A673 (cell line): ENCODE measurements at regions of chr2 and their contacts with region 1.

Region 1: GRCh38 chr2:122748552-122749011 is 993.1 kb downstream of the TSN start:
- DNase-seq: peak; percentile 95
- H3K4me3 ChIP-seq: no peak overlapping the region
- H3K27ac ChIP-seq: peak overlapping the region; percentile 70
- H3K4me1 ChIP-seq: peaks cover 48% of the 10 kb centered on the region
- H3K27me3 ChIP-seq: no peaks in the 10 kb centered on the region
- CTCF ChIP-seq: peak; percentile 55

Region 2: DNA sequence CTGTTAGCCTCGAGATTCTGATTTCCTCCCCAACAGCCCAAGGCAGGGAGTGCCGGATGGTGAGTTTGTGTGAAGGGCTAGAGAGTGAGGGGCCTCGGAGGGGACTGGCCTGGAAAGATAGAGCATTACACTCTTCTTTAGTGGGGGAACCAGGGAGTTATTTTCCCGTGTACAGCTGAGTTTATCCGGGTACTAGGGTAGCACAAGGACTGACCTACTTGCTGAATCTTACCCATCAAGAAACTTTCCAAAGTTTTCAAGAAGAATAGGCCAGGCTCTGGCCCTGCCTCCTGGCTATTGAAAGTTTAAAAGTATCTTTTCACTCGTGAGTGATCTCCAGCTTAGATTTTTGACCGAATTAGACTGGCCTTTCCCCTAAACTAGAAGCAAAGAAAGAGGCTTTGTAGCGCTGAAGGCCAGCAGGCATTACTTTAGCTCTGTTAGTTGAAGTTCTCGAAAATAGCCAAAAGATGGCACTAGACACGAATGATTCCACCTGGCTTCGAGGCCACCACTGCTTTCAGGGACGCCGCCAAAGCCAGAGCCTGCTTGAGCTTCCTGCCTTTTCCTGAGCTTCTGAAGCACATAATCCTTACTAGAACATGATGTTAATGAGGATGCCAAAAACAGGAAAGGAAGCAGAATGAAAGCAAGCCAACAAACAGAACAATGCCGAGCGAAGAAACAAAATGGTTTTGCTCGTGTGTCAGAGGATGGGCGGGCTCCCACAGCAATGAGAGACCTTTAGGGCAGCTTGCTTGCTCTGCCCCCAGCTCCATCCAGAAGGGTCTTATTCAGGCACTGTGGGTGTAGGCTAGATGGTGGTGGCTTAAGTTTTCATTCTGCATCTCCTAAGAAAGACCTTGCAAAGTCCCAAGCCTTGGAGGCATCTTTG is 937.4 kb before region 1 on chr2:
- CTCF ChIA-PET with region 1: no interaction called
- POLR2A ChIA-PET with region 1: no interaction called
- intact Hi-C with region 1: loop called (anchors 5 kb)
- DNase-seq: peak; percentile 89
- H3K4me3 ChIP-seq: no peak overlapping the region
- H3K27ac ChIP-seq: no peak overlapping the region
- H3K4me1 ChIP-seq: peaks cover 10% of the 10 kb centered on the region
- H3K27me3 ChIP-seq: no peaks in the 10 kb centered on the region
- CTCF ChIP-seq: peak; percentile 80

Region 3: DNA sequence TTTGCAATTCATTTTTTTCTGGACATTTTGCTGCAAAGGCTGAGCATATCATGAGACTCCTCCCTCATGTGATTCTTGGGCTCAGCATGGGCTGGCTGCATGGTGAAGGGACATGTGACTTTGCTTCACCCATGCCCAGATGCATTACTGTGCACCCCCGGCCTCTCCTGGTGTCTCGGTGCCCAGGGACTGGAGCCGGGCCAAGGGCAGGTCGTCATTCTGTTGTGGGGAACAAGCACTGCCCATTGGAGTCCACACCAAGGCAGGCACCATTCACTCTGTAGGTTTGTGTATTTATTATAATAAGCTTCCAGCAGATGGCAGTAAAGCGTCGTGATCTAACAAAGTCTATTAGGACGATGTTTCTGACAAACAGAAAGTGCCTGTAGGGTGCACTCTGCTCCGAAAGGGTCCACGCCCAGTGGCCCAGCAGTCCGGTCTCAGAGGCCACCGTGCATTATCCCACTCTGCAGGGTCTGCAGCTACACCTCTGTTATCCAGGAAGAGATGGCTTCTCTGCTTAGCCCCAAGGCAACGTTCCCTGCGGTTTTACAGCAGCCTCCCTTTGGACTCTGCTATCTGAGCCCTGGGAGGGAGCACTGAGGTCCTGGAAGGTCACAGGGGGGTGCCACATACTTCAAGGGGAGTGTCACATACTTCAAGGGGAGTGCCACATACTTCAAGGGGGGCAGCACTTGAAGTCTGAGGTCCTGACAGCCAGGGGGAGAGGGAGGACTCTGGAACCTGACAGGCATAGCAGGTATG is 773.5 kb before region 1 on chr2:
- CTCF ChIA-PET with region 1: no interaction called
- POLR2A ChIA-PET with region 1: no interaction called
- intact Hi-C with region 1: loop called (anchors 1 kb)
- DNase-seq: peak; percentile 93
- H3K4me3 ChIP-seq: no peak overlapping the region
- H3K27ac ChIP-seq: peak overlapping the region; percentile 76
- H3K4me1 ChIP-seq: peaks cover 47% of the 10 kb centered on the region
- H3K27me3 ChIP-seq: no peaks in the 10 kb centered on the region
- CTCF ChIP-seq: peak; percentile 74

Region 4: DNA sequence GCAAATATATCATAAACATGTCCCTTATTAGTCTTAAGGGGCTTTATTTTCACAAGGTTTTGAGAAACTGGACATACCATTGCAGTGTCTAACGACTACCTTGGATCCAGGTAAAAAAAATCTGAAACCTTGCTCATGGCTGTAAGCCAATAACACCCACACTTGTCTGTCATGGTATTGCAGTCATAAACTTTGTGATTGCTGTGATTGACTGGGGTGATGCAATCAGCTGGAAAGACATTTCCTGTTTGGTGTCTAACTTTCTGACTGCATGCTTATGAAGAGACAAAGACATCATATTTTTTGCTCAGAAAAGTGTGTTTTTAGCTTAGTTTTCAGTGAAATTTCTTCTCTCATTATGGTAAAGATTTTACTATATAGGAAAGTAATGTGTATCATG is 358.2 kb before region 1 on chr2:
- CTCF ChIA-PET with region 1: no interaction called
- POLR2A ChIA-PET with region 1: no interaction called
- intact Hi-C with region 1: loop called (anchors 10 kb)
- DNase-seq: peak; percentile 87
- H3K4me3 ChIP-seq: no peak overlapping the region
- H3K27ac ChIP-seq: peak overlapping the region; percentile 83
- H3K4me1 ChIP-seq: peaks cover 40% of the 10 kb centered on the region
- H3K27me3 ChIP-seq: no peaks in the 10 kb centered on the region
- CTCF ChIP-seq: no peak

Region 5: DNA sequence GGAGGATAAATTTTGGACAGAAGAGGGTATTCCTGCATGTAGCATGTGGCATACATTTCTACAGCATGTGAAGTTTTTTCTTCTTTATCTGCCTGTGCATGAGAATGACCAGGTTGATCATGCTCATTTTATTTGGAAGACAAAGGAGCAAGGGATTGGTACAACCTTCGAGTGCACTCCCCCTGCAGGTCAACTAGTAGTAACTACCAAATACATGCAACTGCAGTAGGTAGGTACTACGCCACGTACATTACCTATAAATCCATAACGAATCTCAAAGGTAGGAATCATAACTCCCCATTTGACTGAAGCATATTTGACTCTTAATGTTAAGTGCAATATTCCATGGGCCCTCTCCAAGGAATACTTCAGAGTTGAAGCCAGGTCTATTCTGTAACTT is 229.2 kb before region 1 on chr2:
- CTCF ChIA-PET with region 1: no interaction called
- POLR2A ChIA-PET with region 1: no interaction called
- intact Hi-C with region 1: loop called (anchors 5 kb)
- DNase-seq: no peak
- H3K4me3 ChIP-seq: no peak overlapping the region
- H3K27ac ChIP-seq: no peak overlapping the region
- H3K4me1 ChIP-seq: peaks cover 51% of the 10 kb centered on the region
- H3K27me3 ChIP-seq: no peaks in the 10 kb centered on the region
- CTCF ChIP-seq: peak; percentile 45